OCI-LY7 (cell line): ENCODE measurements at regions of chr9 and their contacts with region 1.

Region 1: DNA sequence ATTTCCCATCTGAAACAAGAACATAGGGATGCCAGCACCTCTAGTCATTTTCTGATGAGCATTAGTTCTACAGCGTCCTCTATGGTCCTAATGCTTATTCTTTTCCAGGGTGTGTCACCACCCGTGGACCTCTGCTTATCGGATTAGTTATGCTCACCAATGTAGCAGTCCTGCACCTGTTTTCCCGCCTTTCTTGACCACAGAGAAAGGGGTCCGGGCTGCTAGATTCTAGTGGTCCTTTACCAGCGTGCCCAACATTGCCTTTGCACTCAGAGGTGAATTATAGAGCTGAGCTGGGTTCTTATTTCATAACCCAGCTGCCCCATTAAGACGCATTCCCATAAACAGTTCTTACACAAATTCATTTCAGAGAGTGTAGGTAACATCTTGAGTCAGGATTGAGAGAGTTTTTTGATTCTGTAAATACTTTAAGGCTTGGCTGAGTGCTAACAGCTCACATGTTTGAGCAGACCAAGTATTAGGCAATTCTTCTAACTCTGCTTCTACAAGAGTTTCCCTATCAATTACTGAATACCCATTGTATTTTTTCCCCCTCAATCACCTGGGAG is 2205.1 kb upstream of the C9orf72 start:
- DNase-seq: no peak
- H3K4me3 ChIP-seq: no peak overlapping the region
- H3K27ac ChIP-seq: no peak overlapping the region
- H3K4me1 ChIP-seq: peaks cover 3% of the 10 kb centered on the region
- CTCF ChIP-seq: no peak

Region 2: GRCh38 chr9:28820741-28821140 is 957.6 kb before region 1 on chr9:
- CTCF ChIA-PET with region 1: no interaction called
- POLR2A ChIA-PET with region 1: no interaction called
- intact Hi-C with region 1: no loop called
- DNase-seq: no peak
- H3K4me3 ChIP-seq: no peak overlapping the region
- H3K27ac ChIP-seq: no peak overlapping the region
- H3K4me1 ChIP-seq: no peaks in the 10 kb centered on the region
- CTCF ChIP-seq: no peak

Region 3: DNA sequence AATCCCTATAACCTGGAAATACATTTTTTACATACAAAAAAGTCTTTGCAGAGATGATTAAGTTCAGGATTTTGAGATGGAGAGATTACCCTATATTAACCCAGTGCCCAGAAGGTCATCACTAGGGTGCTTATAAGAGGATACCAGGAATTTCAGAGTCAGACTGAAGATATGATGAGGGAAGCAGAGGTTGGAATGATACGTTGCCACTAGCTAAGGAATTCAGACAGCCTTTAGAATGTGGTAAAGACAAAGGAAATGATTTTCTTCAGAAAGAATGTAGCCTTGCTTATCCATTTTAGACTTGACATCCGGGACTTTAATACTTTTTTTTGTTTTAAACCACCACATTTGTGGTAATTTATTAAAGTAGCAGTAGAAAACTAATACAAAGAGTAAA is 28.3 kb before region 1 on chr9:
- CTCF ChIA-PET with region 1: no interaction called
- POLR2A ChIA-PET with region 1: interaction called, 3 read pairs
- intact Hi-C with region 1: loop called (anchors 1 kb)
- DNase-seq: no peak
- H3K4me3 ChIP-seq: no peak overlapping the region
- H3K27ac ChIP-seq: no peak overlapping the region
- H3K4me1 ChIP-seq: no peaks in the 10 kb centered on the region
- CTCF ChIP-seq: no peak